ENCODE measurements at regions of chr21 and their contacts with region 1.

Region 1: GRCh38 chr21:32727687-32728455 is at the start of gene SYNJ1:
- DNase-seq: peak; percentile 94
- H3K4me3 Mint-ChIP-seq: peak within 1 kb of the TSS; percentile 96
- H3K27ac Mint-ChIP-seq: peak within 1 kb of the TSS; percentile 88
- H3K4me1 Mint-ChIP-seq: peaks cover 45% of the 10 kb centered on the region
- H3K27me3 Mint-ChIP-seq: no peaks in the 10 kb centered on the region
- total RNA-seq, gene SYNJ1: 7.4 to 10.9 TPM

Region 2: DNA sequence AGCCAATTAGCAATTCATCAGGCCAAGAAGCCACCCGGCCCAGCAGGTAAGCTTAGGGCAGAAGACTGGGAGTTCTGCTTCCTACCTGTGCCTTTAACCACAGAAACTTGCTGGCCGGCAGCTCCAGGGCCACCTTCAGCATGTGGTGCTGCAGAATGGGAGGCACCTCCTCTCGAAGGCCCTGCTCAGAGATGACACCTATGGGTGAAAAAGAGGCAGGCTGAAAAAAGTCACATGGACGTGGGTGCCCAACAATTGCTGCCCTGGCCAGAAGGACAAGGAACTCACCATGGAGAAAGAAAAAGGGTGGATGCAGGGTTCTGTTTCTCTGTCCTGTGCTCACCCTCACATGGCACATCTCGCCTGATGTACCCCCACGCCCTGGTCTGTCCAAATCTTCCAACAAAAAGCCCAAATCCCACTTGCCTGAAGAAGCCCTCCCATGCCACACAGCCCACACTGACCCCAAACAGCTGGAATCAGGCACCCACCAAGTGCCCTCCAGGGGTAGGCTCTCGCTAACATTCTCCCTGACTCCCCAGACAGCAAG is 368.1 kb before region 1 on chr21:
- CTCF ChIA-PET with region 1: no interaction called
- intact Hi-C with region 1: no loop called
- DNase-seq: no peak
- H3K4me3 Mint-ChIP-seq: no peak overlapping the region
- H3K27ac Mint-ChIP-seq: no peak overlapping the region
- H3K4me1 Mint-ChIP-seq: no peaks in the 10 kb centered on the region
- H3K27me3 Mint-ChIP-seq: no peaks in the 10 kb centered on the region

Region 3: DNA sequence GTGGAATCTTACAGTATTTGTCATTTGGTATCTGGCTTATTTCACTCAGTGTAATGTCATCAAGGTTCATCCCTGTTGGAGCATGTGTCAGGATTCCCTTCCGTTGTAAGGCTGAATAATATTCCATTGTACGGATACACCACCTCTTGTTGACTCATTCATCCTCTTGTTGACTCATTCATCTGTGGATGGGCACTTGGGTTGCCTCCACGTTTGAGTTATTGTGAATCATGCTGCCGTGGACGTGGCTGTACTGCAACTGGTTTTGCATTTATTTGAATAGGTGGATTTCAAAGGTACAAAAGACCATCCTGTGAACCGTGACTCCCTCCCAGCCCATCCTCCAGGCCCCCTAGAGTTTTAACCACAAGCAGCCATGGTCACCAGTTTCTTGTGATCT is 130.7 kb before region 1 on chr21:
- CTCF ChIA-PET with region 1: no interaction called
- intact Hi-C with region 1: no loop called
- DNase-seq: no peak
- H3K4me3 Mint-ChIP-seq: no peak overlapping the region
- H3K27ac Mint-ChIP-seq: no peak overlapping the region
- H3K4me1 Mint-ChIP-seq: no peaks in the 10 kb centered on the region
- H3K27me3 Mint-ChIP-seq: no peaks in the 10 kb centered on the region

Region 4: GRCh38 chr21:32612075-32612998 is 115.5 kb before region 1 on chr21 and contains the start of gene CFAP298:
- CTCF ChIA-PET with region 1: no interaction called
- intact Hi-C with region 1: loop called (anchors 1 kb)
- DNase-seq: peak; percentile 88
- H3K4me3 Mint-ChIP-seq: peak within 1 kb of the TSS; percentile 98
- H3K27ac Mint-ChIP-seq: peak within 1 kb of the TSS; percentile 83
- H3K4me1 Mint-ChIP-seq: peaks cover 13% of the 10 kb centered on the region
- H3K27me3 Mint-ChIP-seq: no peaks in the 10 kb centered on the region
- total RNA-seq, gene CFAP298: 33.3 to 35.6 TPM

Region 5: GRCh38 chr21:32653311-32653901 is 74.5 kb before region 1 on chr21:
- CTCF ChIA-PET with region 1: no interaction called
- intact Hi-C with region 1: loop called (anchors 2 kb)
- DNase-seq: peak; percentile 50
- H3K4me3 Mint-ChIP-seq: no peak overlapping the region
- H3K27ac Mint-ChIP-seq: no peak overlapping the region
- H3K4me1 Mint-ChIP-seq: peaks cover 3% of the 10 kb centered on the region
- H3K27me3 Mint-ChIP-seq: no peaks in the 10 kb centered on the region

Region 6: DNA sequence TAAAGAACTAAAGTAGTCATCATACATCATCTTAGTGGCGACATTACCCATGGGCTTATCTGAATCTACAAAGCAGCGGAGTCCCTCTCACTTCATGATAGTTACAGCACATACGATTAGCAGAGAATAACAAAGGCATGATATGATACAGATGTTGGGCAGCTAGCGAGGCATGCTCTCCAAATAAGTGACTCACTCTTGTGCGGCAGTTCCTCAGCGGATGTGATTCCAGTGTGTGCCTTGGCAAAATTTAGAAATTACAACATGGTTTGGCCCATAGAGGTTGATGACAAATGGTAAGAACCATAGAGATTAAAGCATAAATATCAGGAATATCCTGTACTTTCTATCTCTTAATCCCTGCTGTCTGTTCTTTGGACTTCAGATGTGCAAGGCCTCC is 91.8 kb after region 1 on chr21:
- CTCF ChIA-PET with region 1: no interaction called
- intact Hi-C with region 1: no loop called
- DNase-seq: no peak
- H3K4me3 Mint-ChIP-seq: no peak overlapping the region
- H3K27ac Mint-ChIP-seq: no peak overlapping the region
- H3K4me1 Mint-ChIP-seq: no peaks in the 10 kb centered on the region
- H3K27me3 Mint-ChIP-seq: no peaks in the 10 kb centered on the region

Measured in activated naive CD4-positive, alpha-beta T cell treated with anti-CD3 and anti-CD28 coated beads for 36 hours (primary cell).